MCF 10A (cell line): ENCODE measurements at regions of chr12 and their contacts with region 1.

Region 1: GRCh38 chr12:46675736-46676135 is 150.1 kb downstream of the SLC38A4 start:
- DNase-seq: peak; percentile 72
- H3K4me3 Mint-ChIP-seq: no peak overlapping the region
- H3K27ac Mint-ChIP-seq: peak overlapping the region; percentile 98
- H3K4me1 Mint-ChIP-seq: peaks cover 43% of the 10 kb centered on the region
- H3K27me3 Mint-ChIP-seq: no peaks in the 10 kb centered on the region
- CTCF ChIP-seq: peak; percentile 69

Region 2: GRCh38 chr12:46124848-46125619 is 550.7 kb before region 1 on chr12:
- CTCF ChIA-PET with region 1: interaction called, 12 read pairs
- POLR2A ChIA-PET with region 1: interaction called, 8 read pairs
- intact Hi-C with region 1: no loop called
- DNase-seq: peak; percentile 87
- H3K4me3 Mint-ChIP-seq: peak overlapping the region; percentile 64
- H3K27ac Mint-ChIP-seq: peak overlapping the region; percentile 28
- H3K4me1 Mint-ChIP-seq: peaks cover 13% of the 10 kb centered on the region
- H3K27me3 Mint-ChIP-seq: peaks cover 16% of the 10 kb centered on the region
- CTCF ChIP-seq: peak; percentile 69

Region 3: DNA sequence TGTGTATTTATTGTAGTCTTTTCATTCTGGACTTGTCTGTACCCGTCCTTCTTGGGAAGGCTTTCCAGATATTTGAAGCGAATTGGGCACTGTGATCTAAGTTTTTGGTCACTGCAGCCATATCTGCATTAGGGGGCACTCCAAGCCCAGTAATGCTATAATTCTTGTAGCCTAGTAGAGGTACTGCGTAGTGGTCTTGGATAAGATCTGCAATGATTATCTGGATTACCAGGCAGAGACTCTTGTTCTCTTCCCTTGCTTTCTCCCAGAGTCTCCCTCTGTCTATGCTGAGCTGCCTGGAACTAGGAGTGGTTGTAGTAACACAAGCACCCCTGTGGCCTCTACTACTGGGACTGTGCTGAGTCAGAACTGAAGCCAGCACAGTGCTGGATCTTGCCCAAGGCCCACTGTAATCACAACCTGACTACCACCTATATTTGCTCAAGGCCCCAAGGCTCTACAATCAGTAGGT is 333.1 kb before region 1 on chr12:
- CTCF ChIA-PET with region 1: interaction called, 11 read pairs
- POLR2A ChIA-PET with region 1: interaction called, 3 read pairs
- intact Hi-C with region 1: no loop called
- DNase-seq: peak; percentile 63
- H3K4me3 Mint-ChIP-seq: no peak overlapping the region
- H3K27ac Mint-ChIP-seq: peak overlapping the region; percentile 81
- H3K4me1 Mint-ChIP-seq: peaks cover 14% of the 10 kb centered on the region
- H3K27me3 Mint-ChIP-seq: no peaks in the 10 kb centered on the region
- CTCF ChIP-seq: peak; percentile 31

Region 4: GRCh38 chr12:46430340-46430948 is 245.3 kb before region 1 on chr12:
- CTCF ChIA-PET with region 1: interaction called, 3 read pairs
- POLR2A ChIA-PET with region 1: interaction called, 45 read pairs
- intact Hi-C with region 1: loop called (anchors 2 kb)
- DNase-seq: peak; percentile 93
- H3K4me3 Mint-ChIP-seq: peak overlapping the region; percentile 61
- H3K27ac Mint-ChIP-seq: peak overlapping the region; percentile 95
- H3K4me1 Mint-ChIP-seq: peaks cover 33% of the 10 kb centered on the region
- H3K27me3 Mint-ChIP-seq: no peaks in the 10 kb centered on the region
- CTCF ChIP-seq: no peak

Region 5: DNA sequence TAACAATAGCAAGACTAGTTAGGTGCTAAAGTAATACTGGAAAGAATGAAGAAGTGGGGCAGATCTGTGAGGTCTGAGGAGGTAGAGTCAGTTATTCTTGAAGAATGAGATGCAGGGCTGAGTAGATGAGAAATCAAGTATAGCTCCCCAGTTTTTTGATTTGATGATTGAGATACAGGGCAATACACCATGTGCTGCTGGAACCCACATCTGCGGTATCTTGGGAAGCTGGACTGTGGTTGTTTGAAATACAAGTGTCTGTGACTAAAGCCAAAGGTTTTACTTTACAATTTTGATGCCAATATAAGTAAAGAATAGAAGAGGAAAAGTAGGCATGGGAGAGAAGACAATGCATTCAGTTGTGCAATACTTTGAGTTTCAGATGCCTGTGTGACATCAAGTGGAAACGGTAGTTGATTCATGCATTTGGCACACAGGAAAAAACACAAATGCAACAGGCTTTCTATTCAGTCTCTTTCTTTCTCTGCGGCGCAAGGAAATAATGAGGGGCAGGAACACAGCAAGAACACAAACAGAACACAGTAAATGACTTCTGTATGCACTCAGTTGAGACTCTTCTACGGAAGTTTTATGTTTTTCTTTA is 113.0 kb before region 1 on chr12:
- CTCF ChIA-PET with region 1: interaction called, 3 read pairs
- POLR2A ChIA-PET with region 1: interaction called, 20 read pairs
- intact Hi-C with region 1: loop called (anchors 2 kb)
- DNase-seq: peak; percentile 95
- H3K4me3 Mint-ChIP-seq: peak overlapping the region; percentile 26
- H3K27ac Mint-ChIP-seq: peak overlapping the region; percentile 69
- H3K4me1 Mint-ChIP-seq: peaks cover 40% of the 10 kb centered on the region
- H3K27me3 Mint-ChIP-seq: no peaks in the 10 kb centered on the region
- CTCF ChIP-seq: no peak

Region 6: DNA sequence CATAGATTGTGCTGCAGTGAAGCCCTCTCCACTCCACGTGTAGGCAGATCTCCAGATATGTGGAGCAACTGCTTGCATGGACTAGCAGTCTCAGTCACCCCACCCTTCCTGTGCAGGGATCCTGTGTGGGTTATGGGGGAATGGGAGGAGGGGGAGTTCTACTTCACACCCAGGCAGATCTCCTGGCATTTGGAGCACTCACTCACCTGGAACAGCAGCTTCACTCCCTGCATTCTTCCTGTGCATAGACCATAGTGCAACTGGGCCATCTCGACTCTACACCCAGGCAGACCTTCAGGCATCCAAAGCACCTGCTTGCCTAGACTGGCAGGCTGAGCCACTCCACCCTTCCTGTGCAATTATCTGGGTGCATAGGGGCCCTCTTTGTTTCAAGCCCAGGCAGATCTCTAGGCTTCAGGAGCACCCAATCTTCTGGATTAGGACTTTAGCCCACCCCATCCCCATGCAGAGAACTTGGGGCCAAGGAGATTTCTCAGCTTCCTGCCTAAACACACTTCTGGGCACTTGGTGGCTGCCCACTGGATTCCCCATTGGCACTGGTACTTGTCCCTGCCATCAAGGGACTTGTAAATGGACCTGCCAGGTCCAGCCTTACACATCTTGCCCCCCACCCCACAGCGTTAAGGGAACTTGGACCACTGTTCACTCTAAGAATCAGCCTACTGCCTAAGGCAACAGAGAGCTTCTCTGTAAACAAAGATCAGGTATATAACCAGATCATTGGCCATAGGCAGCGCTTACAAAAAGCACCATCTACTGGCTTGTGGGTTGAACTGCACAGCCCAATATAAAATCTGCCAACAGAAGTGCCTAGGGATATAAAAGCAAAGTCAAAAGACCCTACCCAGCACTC is 307.9 kb after region 1 on chr12:
- CTCF ChIA-PET with region 1: no interaction called
- POLR2A ChIA-PET with region 1: interaction called, 4 read pairs
- intact Hi-C with region 1: loop called (anchors 5 kb)
- DNase-seq: peak; percentile 72
- H3K4me3 Mint-ChIP-seq: no peak overlapping the region
- H3K27ac Mint-ChIP-seq: peak overlapping the region; percentile 28
- H3K4me1 Mint-ChIP-seq: peaks cover 13% of the 10 kb centered on the region
- H3K27me3 Mint-ChIP-seq: no peaks in the 10 kb centered on the region
- CTCF ChIP-seq: peak; percentile 90